ENCODE measurements at regions of chr7 and their contacts with region 1.

Region 1: GRCh38 chr7:44606450-44607254 is at the start of gene OGDH:
- DNase-seq: peak; percentile 98

Region 2: DNA sequence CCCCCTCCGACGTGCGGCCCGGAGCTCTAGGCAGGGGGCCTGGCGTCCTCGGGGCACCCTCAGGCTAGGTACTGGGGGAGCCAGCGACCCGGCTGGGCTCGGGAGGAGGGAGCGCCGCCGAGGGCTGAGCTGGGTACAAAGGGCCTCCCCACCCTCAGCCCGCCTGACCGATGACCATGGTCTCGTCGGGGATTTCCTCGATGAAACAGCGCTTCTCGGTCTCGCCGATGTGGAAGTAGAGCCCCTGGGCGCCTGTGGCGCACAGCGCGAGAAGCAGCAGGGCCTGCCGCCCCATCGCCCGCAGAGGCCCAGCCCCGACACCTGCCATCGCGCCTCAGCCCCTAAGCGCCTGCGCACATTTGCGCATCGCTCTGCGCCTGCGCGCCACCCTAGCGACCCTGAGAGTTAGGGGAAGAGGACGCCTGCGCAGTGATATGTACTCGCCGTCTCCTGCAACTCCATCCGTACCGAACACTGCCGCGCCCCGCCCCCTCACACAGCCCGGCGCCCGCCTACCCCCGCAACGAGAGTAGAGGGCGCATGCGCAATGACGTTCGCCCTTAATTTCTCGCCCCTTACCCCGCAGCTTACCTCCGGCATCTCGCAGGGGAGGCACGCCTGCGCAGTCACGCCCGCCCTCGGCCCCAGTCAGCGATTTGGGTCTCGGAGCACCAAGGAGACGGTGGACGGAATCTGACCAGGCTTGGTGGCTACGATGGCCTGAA is 24.6 kb before region 1 on chr7 and contains the start of gene TMED4:
- CTCF ChIA-PET with region 1: no interaction called
- POLR2A ChIA-PET with region 1: interaction called, 23 read pairs
- DNase-seq: peak; percentile 100

Region 3: GRCh38 chr7:44638611-44639557 is 32.2 kb after region 1 on chr7:
- CTCF ChIA-PET with region 1: no interaction called
- POLR2A ChIA-PET with region 1: interaction called, 10 read pairs
- DNase-seq: no peak

Region 4: DNA sequence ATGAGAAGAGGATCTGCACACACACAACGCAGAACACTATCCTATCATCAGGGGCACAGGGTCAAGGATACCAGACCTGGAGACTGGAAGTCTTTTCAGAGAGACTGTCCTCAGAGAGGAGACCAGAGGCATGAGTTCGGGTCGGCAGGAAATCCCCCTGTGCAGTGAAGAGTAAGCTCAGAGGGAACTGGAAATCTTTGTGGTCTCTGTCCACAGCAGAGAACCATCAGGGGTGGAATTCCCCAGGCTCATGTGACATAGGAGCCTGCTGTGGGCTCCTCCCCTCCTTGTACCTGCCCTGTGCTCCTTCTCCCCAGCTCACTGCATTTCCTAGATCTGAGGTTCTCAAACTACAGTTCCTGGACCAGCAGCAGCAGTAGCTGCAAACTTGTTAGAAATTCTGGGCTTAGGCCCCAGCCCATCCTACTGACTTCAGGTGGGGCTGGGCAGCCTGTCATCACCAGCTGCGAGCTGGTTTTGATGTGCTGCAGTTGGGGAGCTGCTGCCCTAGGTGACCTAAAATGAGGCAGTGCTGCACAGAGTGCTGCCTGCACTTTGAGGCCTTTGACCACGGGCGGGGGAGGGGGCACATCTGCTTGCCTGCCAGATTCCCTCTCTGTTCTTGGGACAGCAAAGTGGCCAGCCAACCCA is 144.4 kb after region 1 on chr7:
- CTCF ChIA-PET with region 1: no interaction called
- POLR2A ChIA-PET with region 1: interaction called, 10 read pairs
- DNase-seq: no peak

Region 5: DNA sequence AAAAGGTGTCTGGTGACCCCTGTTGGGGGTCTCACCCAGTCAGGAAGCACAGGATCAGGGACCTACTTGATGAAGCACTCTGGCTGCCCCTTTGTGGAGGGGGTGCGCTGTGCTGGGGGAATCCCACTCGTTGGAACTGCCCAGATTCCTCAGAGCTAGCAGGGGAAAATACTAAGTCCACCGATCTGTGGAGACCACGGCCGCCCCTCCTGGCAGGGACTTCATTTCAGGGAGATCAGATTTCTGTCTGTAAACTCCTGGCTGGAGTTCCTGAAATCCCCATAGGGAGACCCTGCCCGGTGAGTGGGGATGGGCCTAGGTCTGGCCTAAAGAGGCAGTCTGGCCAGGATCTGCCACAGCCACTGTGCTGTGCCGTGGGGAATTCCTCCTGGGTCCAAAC is 888.2 kb after region 1 on chr7:
- CTCF ChIA-PET with region 1: no interaction called
- POLR2A ChIA-PET with region 1: no interaction called
- DNase-seq: no peak

Measured in HEK293T (cell line).